Right lobe of liver (tissue), 6 donors: ENCODE measurements at regions of chr7 and their contacts with region 1.

Region 1: GRCh38 chr7:88357781-88358525 is 51.3 kb upstream of the STEAP4 start:
- DNase-seq: peak in 1 of 3 donors; percentile 48
- ATAC-seq: peak; percentile 96 to 98 (median 98)
- H3K4me3 ChIP-seq: peak overlapping the region; percentile 31 to 36 (median 32)
- H3K27ac ChIP-seq: peak overlapping the region; percentile 11 to 33 (median 30)
- H3K4me1 ChIP-seq: peaks cover 0 to 8% (median 0%) of the 10 kb centered on the region in 4 donors
- H3K27me3 ChIP-seq: no peaks in the 10 kb centered on the region
- CTCF ChIP-seq: peak; percentile 65 to 75 (median 68)
- POLR2A ChIP-seq: no peak

Region 2: DNA sequence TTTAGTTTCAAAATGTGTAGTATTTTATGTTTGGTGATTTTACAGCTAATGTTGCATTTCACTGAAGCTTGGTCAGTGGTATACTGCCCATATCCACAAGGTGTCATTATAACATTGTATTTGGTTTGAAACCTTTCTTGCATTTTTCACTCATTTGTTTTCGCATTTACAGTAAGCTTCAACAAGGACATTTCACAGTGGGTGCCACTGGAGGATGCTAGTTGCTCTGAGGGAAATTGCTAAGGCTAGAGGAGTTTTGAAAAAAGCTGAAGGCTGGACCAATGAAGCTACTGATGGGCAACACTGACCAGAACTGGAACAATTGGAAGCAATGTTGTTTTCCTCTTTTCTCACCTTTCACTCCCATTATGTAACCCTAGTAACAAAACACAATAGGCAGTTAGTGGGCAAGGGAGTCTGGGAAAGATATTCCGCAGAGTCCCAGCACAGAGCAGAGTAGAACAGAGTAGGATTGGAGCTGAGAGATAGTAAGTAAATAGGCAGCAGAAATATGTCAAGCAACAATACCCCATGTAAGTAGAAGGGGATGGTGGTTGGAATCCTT is 114.5 kb before region 1 on chr7:
- intact Hi-C with region 1: loop called in 1 of 2 experiments (anchors 10 kb)
- DNase-seq: no peak
- ATAC-seq: peak; percentile 88 to 100 (median 90)
- H3K4me3 ChIP-seq: no peak overlapping the region
- H3K27ac ChIP-seq: no peak overlapping the region
- H3K4me1 ChIP-seq: no peaks in the 10 kb centered on the region
- H3K27me3 ChIP-seq: no peaks in the 10 kb centered on the region
- CTCF ChIP-seq: peak; percentile 76 to 87 (median 81)
- POLR2A ChIP-seq: no peak

Region 3: DNA sequence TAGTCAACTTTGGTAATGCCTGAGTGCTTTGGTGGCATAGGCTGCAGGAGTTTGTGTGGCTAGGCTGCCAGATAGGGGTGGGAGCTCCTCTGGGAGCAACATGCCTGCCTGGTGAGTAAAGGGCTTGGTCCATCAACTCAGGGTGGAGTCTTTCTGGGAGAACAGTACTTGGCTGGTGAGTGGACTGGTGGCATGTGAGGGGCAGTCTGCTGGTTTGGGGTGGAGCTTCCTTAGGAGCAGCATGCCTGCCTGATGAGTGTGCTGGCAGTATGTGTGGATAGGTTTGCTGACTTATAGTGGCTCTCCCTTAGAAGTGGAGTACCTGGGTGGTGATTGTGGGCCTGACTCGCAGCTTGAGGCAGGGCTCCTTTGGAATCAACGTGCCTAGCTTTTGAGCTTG is 103.2 kb before region 1 on chr7:
- intact Hi-C with region 1: loop called (anchors 5 to 10 kb)
- DNase-seq: no peak
- ATAC-seq: no peak
- H3K4me3 ChIP-seq: no peak overlapping the region
- H3K27ac ChIP-seq: no peak overlapping the region
- H3K4me1 ChIP-seq: no peaks in the 10 kb centered on the region
- H3K27me3 ChIP-seq: no peaks in the 10 kb centered on the region
- CTCF ChIP-seq: no peak
- POLR2A ChIP-seq: no peak

Region 4: DNA sequence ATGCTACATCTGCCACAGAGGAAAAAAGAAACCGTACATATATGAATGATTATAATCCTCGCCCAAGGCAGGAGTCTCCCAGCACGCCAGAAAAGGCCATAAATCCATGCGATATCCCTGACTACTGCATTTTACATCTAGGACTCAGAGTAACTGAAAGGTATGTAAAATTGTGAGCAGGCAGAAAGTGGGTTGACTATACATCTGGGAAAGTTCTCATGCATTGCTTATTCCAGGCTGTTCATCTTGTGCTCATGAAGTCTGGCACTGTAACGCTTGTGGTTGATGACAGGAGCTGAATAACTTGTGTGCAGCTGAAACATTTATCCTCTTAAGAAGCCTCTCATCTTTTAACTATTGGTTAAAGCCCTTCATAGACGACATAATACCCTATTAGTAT is 142.2 kb after region 1 on chr7:
- intact Hi-C with region 1: no loop called
- DNase-seq: no peak
- ATAC-seq: no peak
- H3K4me3 ChIP-seq: no peak overlapping the region
- H3K27ac ChIP-seq: no peak overlapping the region
- H3K4me1 ChIP-seq: no peaks in the 10 kb centered on the region
- H3K27me3 ChIP-seq: no peaks in the 10 kb centered on the region
- CTCF ChIP-seq: no peak
- POLR2A ChIP-seq: no peak